ENCODE measurements at regions of chr17 and their contacts with region 1.

Region 1: GRCh38 chr17:57440522-57441485 is 184.5 kb downstream of the MSI2 start:
- DNase-seq: peak; percentile 26 to 82 (median 70)
- ATAC-seq: peak; percentile 88
- H3K4me3 ChIP-seq: no peak overlapping the region
- H3K4me3 Mint-ChIP-seq: peak overlapping the region; percentile 36 to 78 (median 52)
- H3K27ac ChIP-seq: peak overlapping the region; percentile 36
- H3K27ac Mint-ChIP-seq: peak overlapping the region; percentile 81 to 96 (median 92)
- H3K4me1 ChIP-seq: peaks cover 31 to 39% of the 10 kb centered on the region in 2 donors
- H3K4me1 Mint-ChIP-seq: peaks cover 58 to 87% (median 81%) of the 10 kb centered on the region in 7 donors
- H3K27me3 ChIP-seq: no peaks in the 10 kb centered on the region
- H3K27me3 Mint-ChIP-seq: no peaks in the 10 kb centered on the region

Region 2: DNA sequence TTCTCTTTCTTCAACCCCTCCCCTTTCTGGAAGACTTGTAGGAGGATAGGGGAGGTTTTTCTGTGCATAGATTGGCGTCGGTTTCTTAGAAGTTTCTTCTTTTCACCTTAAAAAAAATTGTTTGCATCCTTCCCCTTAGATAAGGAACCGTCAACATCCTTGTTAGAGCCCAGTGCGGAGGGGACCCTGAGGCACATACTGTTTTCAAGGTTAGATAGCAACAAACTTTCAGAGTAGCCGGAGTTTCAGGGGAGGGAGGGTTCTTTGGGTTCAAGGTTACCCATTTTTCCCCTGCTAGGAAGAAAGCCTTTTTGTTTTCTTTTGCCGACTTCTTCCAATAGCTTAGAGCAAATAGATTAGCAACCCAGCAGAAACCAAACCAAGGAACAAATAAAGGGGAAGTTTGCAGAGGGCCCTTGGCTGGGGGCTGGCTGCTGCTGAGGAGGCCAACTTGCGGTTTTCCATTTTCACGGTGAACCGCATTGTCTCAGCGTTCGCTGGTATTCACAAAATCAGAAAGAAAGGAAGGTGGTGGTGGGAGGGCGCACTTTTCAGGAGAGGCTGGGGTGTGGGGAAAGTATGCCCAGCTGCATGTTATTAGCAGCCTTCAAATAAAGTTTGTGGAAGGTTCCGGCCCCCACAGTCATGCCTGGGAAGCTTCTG is 155.7 kb before region 1 on chr17:
- CTCF ChIA-PET with region 1: no interaction called
- POLR2A ChIA-PET with region 1: no interaction called
- intact Hi-C with region 1: loop called in 1 of 2 experiments (anchors 2 kb)
- DNase-seq: peak in 8 of 9 donors; percentile 4 to 75 (median 16)
- ATAC-seq: peak; percentile 75
- H3K4me3 ChIP-seq: peak overlapping the region; percentile 20
- H3K4me3 Mint-ChIP-seq: peak overlapping the region; percentile 70 to 85 (median 75)
- H3K27ac ChIP-seq: peak overlapping the region; percentile 18
- H3K27ac Mint-ChIP-seq: peak overlapping the region; percentile 55 to 93 (median 79)
- H3K4me1 ChIP-seq: peaks cover 24 to 34% of the 10 kb centered on the region in 2 donors
- H3K4me1 Mint-ChIP-seq: peaks cover 60 to 90% (median 88%) of the 10 kb centered on the region in 7 donors
- H3K27me3 ChIP-seq: no peaks in the 10 kb centered on the region
- H3K27me3 Mint-ChIP-seq: no peaks in the 10 kb centered on the region

Region 3: GRCh38 chr17:57379895-57380434 is 60.8 kb before region 1 on chr17:
- CTCF ChIA-PET with region 1: no interaction called
- POLR2A ChIA-PET with region 1: interaction called, 5 read pairs
- intact Hi-C with region 1: loop called in 1 of 2 experiments (anchors 1 kb)
- DNase-seq: no peak
- ATAC-seq: no peak
- H3K4me3 ChIP-seq: no peak overlapping the region
- H3K4me3 Mint-ChIP-seq: no peak overlapping the region
- H3K27ac ChIP-seq: no peak overlapping the region
- H3K27ac Mint-ChIP-seq: peak overlapping the region in 3 of 9 donors; percentile 16 to 58 (median 19)
- H3K4me1 ChIP-seq: no peaks in the 10 kb centered on the region
- H3K4me1 Mint-ChIP-seq: peaks cover 18 to 35% (median 27%) of the 10 kb centered on the region in 7 donors
- H3K27me3 ChIP-seq: no peaks in the 10 kb centered on the region
- H3K27me3 Mint-ChIP-seq: no peaks in the 10 kb centered on the region

Region 4: GRCh38 chr17:57463103-57463851 is 22.5 kb after region 1 on chr17:
- CTCF ChIA-PET with region 1: no interaction called
- POLR2A ChIA-PET with region 1: no interaction called
- intact Hi-C with region 1: loop called in 1 of 2 experiments (anchors 2 kb)
- DNase-seq: peak in 1 of 9 donors; percentile 87
- ATAC-seq: peak; percentile 41
- H3K4me3 ChIP-seq: no peak overlapping the region
- H3K4me3 Mint-ChIP-seq: peak overlapping the region in 1 of 10 donors; percentile 59
- H3K27ac ChIP-seq: no peak overlapping the region
- H3K27ac Mint-ChIP-seq: peak overlapping the region in 3 of 9 donors; percentile 65 to 82 (median 70)
- H3K4me1 ChIP-seq: peaks cover 0 to 23% of the 10 kb centered on the region in 2 donors
- H3K4me1 Mint-ChIP-seq: peaks cover 37 to 65% (median 44%) of the 10 kb centered on the region in 7 donors
- H3K27me3 ChIP-seq: no peaks in the 10 kb centered on the region
- H3K27me3 Mint-ChIP-seq: no peaks in the 10 kb centered on the region

Region 5: DNA sequence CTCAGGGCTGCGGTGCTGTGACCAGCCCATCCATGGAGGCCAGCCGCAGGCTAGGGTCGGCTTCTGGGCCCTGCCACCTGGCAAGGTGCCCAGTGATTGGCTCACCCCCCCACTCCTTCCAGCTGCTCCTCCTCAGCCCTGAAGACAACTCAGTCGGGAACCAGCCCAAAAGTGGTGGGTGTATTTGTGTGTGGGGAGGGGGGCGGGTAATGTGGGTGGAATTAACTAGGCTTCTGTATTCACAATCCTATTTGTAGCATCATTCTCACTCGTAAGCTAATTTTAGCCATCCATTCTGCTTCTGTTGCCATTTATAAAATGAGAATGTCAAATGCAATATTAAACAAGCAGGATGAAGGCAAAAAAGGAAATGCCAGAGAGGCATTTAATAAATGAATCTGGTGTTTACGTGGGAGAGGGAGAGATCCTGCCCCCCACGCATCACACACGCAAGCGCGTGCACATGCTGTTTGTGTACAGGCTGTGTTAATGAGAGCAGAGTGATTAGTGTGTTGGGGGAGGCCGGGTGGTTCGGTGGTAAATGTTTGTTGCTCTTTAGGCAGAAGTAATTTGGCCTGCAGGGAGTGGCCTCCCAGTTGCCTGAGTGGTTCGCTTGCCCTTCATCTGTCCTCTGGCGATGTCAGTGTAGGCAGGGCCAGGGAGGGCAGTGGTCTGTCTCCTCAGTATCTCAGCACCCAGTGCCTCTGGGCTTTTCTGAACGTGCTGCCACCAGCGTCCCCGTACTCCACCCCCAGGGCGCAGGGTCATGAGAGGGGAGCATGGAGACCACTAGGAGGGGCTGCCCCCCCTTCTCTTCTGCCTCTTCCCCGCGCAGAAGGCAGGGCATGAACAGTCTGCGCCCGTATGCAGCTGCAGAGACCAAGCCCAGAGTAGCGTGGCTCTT is 164.2 kb after region 1 on chr17:
- CTCF ChIA-PET with region 1: no interaction called
- POLR2A ChIA-PET with region 1: no interaction called
- intact Hi-C with region 1: loop called (anchors 5 to 10 kb)
- DNase-seq: peak in 3 of 9 donors; percentile 11 to 65 (median 29)
- ATAC-seq: peak; percentile 37
- H3K4me3 ChIP-seq: peak overlapping the region; percentile 27
- H3K4me3 Mint-ChIP-seq: peak overlapping the region; percentile 67 to 84 (median 76)
- H3K27ac ChIP-seq: peak overlapping the region; percentile 76
- H3K27ac Mint-ChIP-seq: peak overlapping the region; percentile 89 to 100 (median 97)
- H3K4me1 ChIP-seq: peaks cover 67 to 71% of the 10 kb centered on the region in 2 donors
- H3K4me1 Mint-ChIP-seq: peaks cover 49 to 87% (median 75%) of the 10 kb centered on the region in 7 donors
- H3K27me3 ChIP-seq: no peaks in the 10 kb centered on the region
- H3K27me3 Mint-ChIP-seq: no peaks in the 10 kb centered on the region

Region 6: DNA sequence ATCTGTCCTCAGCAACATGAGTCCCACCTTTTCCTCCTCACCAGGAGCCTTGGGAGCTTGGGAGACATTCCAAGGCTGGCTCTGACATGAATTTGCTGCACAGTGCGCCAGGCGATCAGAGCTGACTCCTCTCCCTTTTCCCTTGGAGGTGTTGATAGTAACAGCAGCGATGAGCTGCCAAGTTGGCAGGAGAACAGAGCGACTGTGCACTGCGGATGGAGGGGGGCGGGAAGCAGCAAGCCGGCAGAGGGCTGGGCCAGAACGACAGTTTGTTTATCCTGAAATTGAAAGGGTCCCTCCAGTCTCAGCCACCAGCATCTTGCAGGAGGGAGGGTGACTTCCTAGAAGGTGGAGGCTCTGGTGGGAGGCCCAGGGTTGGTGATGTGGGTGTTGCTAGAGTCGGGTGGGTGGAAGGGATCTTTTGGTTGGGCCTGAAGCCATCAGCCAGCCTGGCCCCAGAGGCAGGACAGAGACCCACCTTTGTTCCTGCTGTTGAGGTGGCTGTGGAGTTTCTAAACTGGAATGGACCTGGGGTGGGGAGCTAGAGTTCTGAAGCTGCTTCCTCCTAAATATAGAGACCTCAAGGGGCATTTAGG is 619.9 kb after region 1 on chr17:
- CTCF ChIA-PET with region 1: no interaction called
- POLR2A ChIA-PET with region 1: no interaction called
- intact Hi-C with region 1: no loop called
- DNase-seq: no peak
- ATAC-seq: no peak
- H3K4me3 ChIP-seq: no peak overlapping the region
- H3K4me3 Mint-ChIP-seq: no peak overlapping the region
- H3K27ac ChIP-seq: no peak overlapping the region
- H3K27ac Mint-ChIP-seq: no peak overlapping the region
- H3K4me1 ChIP-seq: no peaks in the 10 kb centered on the region
- H3K4me1 Mint-ChIP-seq: no peaks in the 10 kb centered on the region
- H3K27me3 ChIP-seq: no peaks in the 10 kb centered on the region
- H3K27me3 Mint-ChIP-seq: peaks cover 0 to 12% (median 4%) of the 10 kb centered on the region in 5 donors

Measured in naive thymus-derived CD4-positive, alpha-beta T cell (primary cell).